Activated CD4-positive, alpha-beta T cell treated with anti-CD3 and anti-CD28 coated beads, Interleukin-2, amount 10 ng/mL, durations not matched to agents 24 days and 14 days (primary cell): ENCODE measurements at regions of chr4 and their contacts with region 1.

Region 1: DNA sequence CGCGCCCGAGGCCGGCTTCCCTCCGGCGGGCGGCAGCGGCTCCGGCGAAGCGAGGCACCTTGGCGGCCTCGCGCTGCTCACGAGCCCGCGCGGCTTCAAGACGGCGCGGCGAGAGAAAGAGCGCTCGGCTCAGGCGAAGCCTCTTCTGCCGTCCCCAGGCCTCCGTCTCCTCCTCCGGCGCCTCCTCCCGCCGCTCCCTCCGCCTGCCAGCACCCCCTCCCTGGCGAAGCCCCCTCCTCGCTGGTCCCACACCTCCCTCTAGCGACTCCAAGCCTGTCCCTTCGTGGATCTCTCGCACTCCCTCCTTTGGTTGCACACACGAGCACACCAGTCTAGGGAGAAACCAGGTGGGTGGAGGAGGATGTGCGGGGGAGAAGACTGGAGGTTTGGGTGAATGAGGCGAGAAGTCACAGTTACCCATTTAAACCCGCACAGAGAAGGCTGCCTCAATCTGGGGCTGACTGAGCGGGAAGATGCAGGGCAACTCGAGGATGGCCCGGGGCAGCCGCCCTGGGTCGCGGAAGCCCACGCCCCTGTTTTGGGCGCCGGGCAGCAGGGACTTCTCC is at the start of gene CAMK2D:
- DNase-seq: peak; percentile 93
- H3K4me3 Mint-ChIP-seq: peak within 1 kb of the TSS; percentile 95
- H3K27ac Mint-ChIP-seq: peak within 1 kb of the TSS; percentile 99
- H3K4me1 Mint-ChIP-seq: peaks cover 44% of the 10 kb centered on the region
- H3K27me3 Mint-ChIP-seq: peaks cover 3% of the 10 kb centered on the region
- total RNA-seq, gene CAMK2D: 63.8 and 69.3 TPM in 2 replicates

Region 2: DNA sequence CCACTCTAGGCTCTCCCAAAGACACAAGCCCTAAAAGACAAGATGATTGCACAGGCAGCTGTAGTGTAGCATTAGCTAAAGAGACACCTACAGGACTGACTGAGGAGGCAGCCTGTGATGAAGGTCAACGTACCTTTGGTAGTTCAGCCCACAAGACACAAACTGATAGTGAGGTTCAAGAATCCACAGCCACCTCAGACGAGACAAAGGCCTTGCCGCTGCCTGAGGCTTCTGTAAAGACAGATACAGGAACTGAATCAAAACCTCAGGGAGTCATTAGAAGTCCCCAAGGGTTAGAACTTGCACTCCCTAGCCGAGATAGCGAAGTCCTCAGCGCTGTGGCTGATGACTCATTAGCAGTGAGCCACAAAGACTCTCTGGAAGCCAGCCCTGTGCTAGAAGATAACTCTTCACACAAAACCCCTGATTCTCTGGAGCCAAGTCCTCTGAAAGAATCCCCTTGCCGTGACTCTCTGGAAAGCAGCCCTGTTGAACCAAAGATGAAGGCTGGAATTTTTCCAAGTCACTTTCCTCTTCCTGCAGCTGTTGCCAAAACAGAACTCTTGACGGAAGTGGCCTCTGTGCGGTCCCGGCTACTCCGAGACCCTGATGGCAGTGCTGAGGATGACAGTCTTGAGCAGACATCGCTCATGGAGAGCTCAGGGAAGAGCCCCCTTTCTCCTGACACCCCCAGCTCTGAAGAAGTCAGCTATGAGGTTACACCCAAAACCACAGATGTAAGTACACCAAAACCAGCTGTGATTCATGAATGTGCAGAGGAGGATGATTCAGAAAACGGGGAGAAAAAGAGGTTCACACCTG is 405.9 kb before region 1 on chr4:
- intact Hi-C with region 1: loop called (anchors 1 kb)
- DNase-seq: peak; percentile 90
- H3K4me3 Mint-ChIP-seq: peak overlapping the region; percentile 54
- H3K27ac Mint-ChIP-seq: peak overlapping the region; percentile 89
- H3K4me1 Mint-ChIP-seq: peaks cover 20% of the 10 kb centered on the region
- H3K27me3 Mint-ChIP-seq: peaks cover 42% of the 10 kb centered on the region

Region 3: GRCh38 chr4:113445286-113445685 is 316.4 kb before region 1 on chr4:
- intact Hi-C with region 1: loop called (anchors 1 kb)
- DNase-seq: no peak
- H3K4me3 Mint-ChIP-seq: no peak overlapping the region
- H3K27ac Mint-ChIP-seq: peak overlapping the region; percentile 66
- H3K4me1 Mint-ChIP-seq: peaks cover 28% of the 10 kb centered on the region
- H3K27me3 Mint-ChIP-seq: peaks cover 1% of the 10 kb centered on the region

Region 4: DNA sequence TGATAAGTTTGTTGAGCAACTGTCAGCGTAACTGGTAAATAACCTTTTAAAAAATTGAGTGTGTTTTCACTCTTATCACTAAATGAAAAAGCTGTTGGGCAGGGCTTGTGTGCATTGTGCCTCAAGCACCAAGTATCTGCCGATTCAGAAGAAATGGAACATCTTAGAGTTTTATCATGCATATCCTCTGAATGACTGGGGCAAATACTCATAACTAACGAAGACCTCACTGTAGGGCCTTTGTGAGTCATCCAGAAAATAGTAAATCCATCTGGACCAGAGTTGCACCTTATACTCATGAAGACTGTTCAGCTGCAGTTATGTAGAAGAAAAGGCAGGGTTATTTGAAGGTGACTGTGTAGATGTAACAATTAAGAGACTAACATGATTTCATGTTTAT is 222.3 kb before region 1 on chr4:
- intact Hi-C with region 1: loop called (anchors 1 kb)
- DNase-seq: no peak
- H3K4me3 Mint-ChIP-seq: peak overlapping the region; percentile 9
- H3K27ac Mint-ChIP-seq: peak overlapping the region; percentile 79
- H3K4me1 Mint-ChIP-seq: peaks cover 30% of the 10 kb centered on the region
- H3K27me3 Mint-ChIP-seq: no peaks in the 10 kb centered on the region

Region 5: DNA sequence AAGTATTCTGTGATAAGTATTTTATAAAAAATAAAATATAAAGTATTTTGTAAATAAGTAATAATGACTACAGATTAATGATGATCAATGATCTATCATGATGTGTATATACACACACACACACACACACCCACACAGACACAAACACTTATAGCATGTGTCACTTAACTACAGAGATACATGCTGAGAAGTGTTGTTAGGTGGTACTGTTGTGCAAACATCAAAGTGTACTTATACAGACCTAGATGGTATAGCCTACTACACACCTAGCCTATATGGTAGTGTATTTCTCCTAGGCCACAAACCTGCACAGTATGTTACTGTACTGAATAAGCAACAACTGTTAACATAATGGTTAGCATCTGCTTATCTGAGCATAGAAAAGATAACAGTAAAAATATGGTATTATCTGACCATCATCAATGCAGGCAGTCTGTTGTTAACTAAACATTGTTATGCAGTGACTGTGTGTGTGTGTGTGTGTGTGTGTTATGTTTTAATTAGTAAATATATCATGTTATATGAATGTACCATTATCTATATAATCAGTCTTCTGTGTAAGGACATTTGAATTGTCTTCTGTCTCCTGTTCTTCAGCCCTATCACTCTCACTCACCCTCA is 138.3 kb before region 1 on chr4:
- intact Hi-C with region 1: loop called (anchors 1 kb)
- DNase-seq: no peak
- H3K4me3 Mint-ChIP-seq: no peak overlapping the region
- H3K27ac Mint-ChIP-seq: no peak overlapping the region
- H3K4me1 Mint-ChIP-seq: peaks cover 27% of the 10 kb centered on the region
- H3K27me3 Mint-ChIP-seq: no peaks in the 10 kb centered on the region

Region 6: DNA sequence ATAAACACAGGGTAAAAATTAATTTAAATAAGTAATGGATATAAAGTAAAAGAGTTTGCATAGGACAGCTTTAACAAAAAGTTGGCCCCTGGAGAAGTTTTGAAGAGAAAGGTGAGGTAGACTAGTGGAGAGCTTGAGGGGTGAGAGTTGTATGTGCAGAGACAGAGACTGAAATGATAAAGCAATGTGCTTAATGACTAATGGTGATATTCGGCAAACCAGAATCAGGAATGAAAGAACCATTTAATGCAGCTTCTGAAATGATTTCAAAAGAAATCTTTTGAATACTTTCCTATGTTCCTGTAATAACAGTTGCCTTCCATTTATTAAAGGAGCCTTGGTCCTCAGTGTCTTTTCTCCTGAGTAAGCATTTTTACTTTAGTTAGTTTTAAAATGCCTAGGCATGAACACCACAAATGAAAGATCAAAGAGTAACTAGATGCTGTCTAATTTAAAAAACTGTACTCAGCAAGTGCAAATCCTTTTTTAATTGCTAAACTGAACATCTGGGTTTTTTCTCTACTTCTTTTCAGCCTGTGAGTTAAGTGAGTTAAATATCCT is 28.7 kb before region 1 on chr4:
- intact Hi-C with region 1: loop called (anchors 1 kb)
- DNase-seq: no peak
- H3K4me3 Mint-ChIP-seq: no peak overlapping the region
- H3K27ac Mint-ChIP-seq: peak overlapping the region; percentile 50
- H3K4me1 Mint-ChIP-seq: peaks cover 48% of the 10 kb centered on the region
- H3K27me3 Mint-ChIP-seq: no peaks in the 10 kb centered on the region

Region 7: GRCh38 chr4:113869743-113870375 is 108.2 kb after region 1 on chr4:
- intact Hi-C with region 1: loop called (anchors 1 kb)
- DNase-seq: peak; percentile 67
- H3K4me3 Mint-ChIP-seq: no peak overlapping the region
- H3K27ac Mint-ChIP-seq: peak overlapping the region; percentile 90
- H3K4me1 Mint-ChIP-seq: peaks cover 12% of the 10 kb centered on the region
- H3K27me3 Mint-ChIP-seq: no peaks in the 10 kb centered on the region